Activated T-helper 2 cell treated with anti-CD3 and anti-CD28 coated beads, Interferon-gamma antibody, Interleukin-2, Interleukin-4, amounts not matched to agents 10 μg/mL and 5 μg/mL and 100 μg/mL, durations not matched to agents 14 hours and 24 hours and 36 hours (primary cell): ENCODE measurements at regions of chr1 and their contacts with region 1.

Region 1: GRCh38 chr1:231395076-231395995 is 26.8 kb downstream of the EGLN1 start:
- DNase-seq: no peak
- H3K4me3 Mint-ChIP-seq: no peak overlapping the region
- H3K27ac Mint-ChIP-seq: no peak overlapping the region
- H3K4me1 Mint-ChIP-seq: peaks cover 28% of the 10 kb centered on the region
- H3K27me3 Mint-ChIP-seq: no peaks in the 10 kb centered on the region

Region 2: DNA sequence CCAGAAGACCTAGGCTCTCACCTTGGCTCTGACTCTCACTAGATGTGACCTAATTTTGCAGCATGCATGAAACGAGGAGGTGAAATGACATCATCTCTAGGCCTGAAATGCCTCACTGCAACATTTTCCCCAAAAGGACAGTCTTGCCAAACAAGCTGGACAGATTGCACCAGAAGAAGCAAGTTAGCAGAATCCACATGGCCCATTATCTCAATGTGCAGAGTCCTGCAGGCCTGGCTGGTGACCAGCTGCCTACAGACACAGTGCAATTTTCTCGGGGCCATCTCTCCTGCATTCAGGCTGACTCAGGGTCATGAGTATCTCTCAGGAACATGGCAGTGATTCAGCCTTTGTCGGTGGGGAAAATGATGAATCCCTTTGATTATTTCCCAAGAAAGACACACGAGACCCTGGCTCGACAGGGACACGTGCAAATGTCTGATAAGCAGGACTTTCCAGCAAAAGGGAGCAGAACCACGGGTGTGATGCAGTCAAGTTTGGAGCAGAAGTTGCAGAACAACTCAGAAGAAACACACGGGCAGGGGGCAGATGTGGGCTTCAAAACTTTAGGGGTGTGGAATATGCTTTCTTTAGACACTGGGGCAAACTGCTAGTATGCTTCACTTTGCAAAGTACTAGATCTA is 194.8 kb before region 1 on chr1:
- intact Hi-C with region 1: no loop called
- DNase-seq: no peak
- H3K4me3 Mint-ChIP-seq: no peak overlapping the region
- H3K27ac Mint-ChIP-seq: no peak overlapping the region
- H3K4me1 Mint-ChIP-seq: peaks cover 3% of the 10 kb centered on the region
- H3K27me3 Mint-ChIP-seq: peaks cover 15% of the 10 kb centered on the region

Region 3: DNA sequence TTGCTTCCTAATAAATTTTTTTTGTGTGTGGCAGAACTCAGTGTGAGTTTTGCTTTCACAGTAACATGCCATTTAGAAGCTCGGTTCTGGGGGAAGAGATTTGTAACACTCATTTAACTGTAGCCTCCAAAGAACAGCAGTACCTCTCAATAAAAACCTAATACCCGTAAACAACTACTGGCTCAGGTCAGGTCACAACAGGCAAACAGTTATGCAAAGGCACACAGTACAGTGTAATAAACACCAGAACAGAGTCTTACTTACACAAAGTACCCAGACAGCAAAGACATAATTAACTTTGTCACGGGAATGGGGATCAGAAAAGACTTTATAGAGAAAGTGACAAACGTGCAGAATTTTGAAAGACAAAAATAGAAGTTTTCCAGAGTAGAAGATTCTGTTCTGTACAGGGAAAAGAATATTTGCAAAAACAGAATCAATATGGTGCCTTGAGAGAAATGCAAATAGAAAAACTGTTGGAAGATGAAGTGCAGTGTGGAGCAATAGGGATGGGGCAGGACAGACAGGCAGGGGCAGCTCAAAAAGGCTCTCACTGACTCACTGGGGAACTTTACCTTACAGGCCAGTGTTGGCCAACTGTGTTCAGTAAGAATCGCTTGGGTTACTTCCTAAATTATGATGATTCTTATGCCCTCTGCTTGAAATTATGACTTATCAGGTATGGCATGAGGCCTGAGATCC is 12.0 kb before region 1 on chr1:
- intact Hi-C with region 1: no loop called
- DNase-seq: no peak
- H3K4me3 Mint-ChIP-seq: no peak overlapping the region
- H3K27ac Mint-ChIP-seq: no peak overlapping the region
- H3K4me1 Mint-ChIP-seq: peaks cover 21% of the 10 kb centered on the region
- H3K27me3 Mint-ChIP-seq: no peaks in the 10 kb centered on the region

Region 4: DNA sequence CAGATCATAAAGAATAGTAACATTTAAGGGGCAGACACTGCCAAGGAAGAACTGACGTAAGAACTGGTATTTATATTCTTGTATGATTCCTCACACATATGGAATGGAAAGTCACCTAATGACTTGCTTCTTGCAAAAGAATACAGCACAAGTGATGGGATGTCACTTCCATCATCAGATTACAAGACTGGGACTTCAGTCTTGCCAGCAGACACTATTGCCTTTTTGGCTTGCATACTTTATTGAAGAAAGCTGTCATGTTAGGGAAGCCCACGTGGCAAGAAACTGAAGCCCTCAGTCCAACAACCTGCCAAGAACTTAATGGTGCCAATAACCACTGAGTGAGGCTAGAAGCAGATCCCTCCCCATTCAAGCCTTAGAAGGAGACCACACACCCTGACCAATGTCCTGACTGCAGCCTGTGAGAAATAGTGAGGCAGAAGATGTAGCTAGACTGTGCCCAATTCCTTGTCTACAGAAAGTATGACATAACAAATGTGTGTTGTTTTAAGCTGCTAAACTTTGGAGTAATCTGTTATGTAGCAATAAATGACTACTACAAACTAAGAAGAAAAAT is 14.8 kb after region 1 on chr1:
- intact Hi-C with region 1: loop called (anchors 2 kb)
- DNase-seq: no peak
- H3K4me3 Mint-ChIP-seq: no peak overlapping the region
- H3K27ac Mint-ChIP-seq: no peak overlapping the region
- H3K4me1 Mint-ChIP-seq: peaks cover 26% of the 10 kb centered on the region
- H3K27me3 Mint-ChIP-seq: no peaks in the 10 kb centered on the region